Calu3 (cell line): ENCODE measurements at regions of chr16 and their contacts with region 1.

Region 1: DNA sequence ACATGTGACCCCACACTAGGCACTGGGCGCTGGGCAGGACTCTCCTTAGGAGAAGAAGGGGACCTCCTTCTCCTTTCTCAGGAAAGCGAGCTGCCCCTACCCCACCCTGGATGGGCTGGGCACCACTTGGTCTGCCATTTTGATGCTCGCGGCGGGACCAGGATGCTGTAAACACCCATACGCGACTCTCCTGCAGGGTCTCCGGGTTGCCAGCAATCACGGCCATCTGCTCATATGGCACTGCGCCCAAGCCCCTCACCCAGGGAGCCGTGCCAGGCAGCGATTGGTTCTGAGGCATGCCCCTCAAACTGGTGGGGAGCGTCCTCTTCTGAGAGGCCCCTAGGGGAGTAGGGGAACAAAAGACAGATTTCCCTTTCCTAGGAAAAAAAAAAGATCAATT is 99.0 kb downstream of the C16orf78 start:
- DNase-seq: no peak
- H3K4me3 Mint-ChIP-seq: no peak overlapping the region
- H3K27ac Mint-ChIP-seq: no peak overlapping the region
- H3K4me1 Mint-ChIP-seq: no peaks in the 10 kb centered on the region
- H3K27me3 Mint-ChIP-seq: peaks cover 41% of the 10 kb centered on the region
- CTCF ChIP-seq: no peak

Region 2: GRCh38 chr16:49531931-49532840 is 59.6 kb after region 1 on chr16:
- CTCF ChIA-PET with region 1: no interaction called
- intact Hi-C with region 1: loop called (anchors 10 kb)
- DNase-seq: no peak
- H3K4me3 Mint-ChIP-seq: no peak overlapping the region
- H3K27ac Mint-ChIP-seq: no peak overlapping the region
- H3K4me1 Mint-ChIP-seq: no peaks in the 10 kb centered on the region
- H3K27me3 Mint-ChIP-seq: peaks cover 95% of the 10 kb centered on the region
- CTCF ChIP-seq: no peak